ENCODE measurements at regions of chr1 and their contacts with region 1.

Region 1: GRCh38 chr1:109099938-109100773 is 9.6 kb downstream of the TMEM167B start:
- DNase-seq: peak; percentile 99
- H3K4me3 Mint-ChIP-seq: peak overlapping the region; percentile 96
- H3K27ac Mint-ChIP-seq: peak overlapping the region; percentile 96
- H3K4me1 Mint-ChIP-seq: peaks cover 11% of the 10 kb centered on the region
- H3K27me3 Mint-ChIP-seq: peaks cover 2% of the 10 kb centered on the region

Region 2: DNA sequence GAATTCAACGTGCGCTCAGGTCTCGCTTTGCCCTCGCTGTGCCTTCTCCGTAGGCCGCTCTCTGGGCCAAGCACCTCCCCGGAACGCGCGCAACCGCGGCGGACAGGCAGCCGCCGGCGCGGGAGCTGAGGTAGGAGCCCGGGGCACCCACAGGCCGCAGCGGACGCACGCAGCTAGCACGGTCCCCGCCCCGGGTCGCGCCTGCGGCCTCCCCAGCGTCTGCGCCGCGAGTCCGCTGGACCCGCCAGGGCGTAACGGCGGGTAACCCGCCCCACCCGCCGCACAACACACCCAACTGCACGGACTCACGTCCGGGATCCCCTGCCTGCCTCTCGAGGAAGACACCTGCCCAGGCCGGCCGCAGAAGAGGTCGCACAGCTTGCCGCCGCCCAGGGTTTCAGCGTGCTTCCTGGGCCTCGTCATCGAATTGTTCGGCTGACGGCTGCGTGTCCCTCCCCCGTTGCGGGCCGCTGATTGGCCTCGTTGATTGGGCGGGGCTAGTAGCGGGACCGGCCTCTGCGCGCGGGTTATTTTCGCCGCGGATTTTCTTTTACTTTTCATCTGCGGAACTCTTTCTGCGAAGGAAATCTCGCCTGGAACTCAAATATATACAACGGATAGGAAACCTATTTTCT is 137.0 kb before region 1 on chr1 and contains the start of gene CLCC1:
- intact Hi-C with region 1: loop called (anchors 5 kb)
- DNase-seq: peak; percentile 98
- H3K4me3 Mint-ChIP-seq: peak within 1 kb of the TSS; percentile 91
- H3K27ac Mint-ChIP-seq: peak within 1 kb of the TSS; percentile 97
- H3K4me1 Mint-ChIP-seq: peaks cover 21% of the 10 kb centered on the region
- H3K27me3 Mint-ChIP-seq: peaks cover 7% of the 10 kb centered on the region
- total RNA-seq, gene CLCC1: 21.5 and 26.2 TPM in 2 replicates

Region 3: GRCh38 chr1:109183058-109183738 is 83.0 kb after region 1 on chr1:
- intact Hi-C with region 1: no loop called
- DNase-seq: no peak
- H3K4me3 Mint-ChIP-seq: no peak overlapping the region
- H3K27ac Mint-ChIP-seq: no peak overlapping the region
- H3K4me1 Mint-ChIP-seq: no peaks in the 10 kb centered on the region
- H3K27me3 Mint-ChIP-seq: peaks cover 2% of the 10 kb centered on the region

Region 4: GRCh38 chr1:109193653-109194590 is 93.8 kb after region 1 on chr1:
- intact Hi-C with region 1: loop called (anchors 5 kb)
- DNase-seq: peak; percentile 91
- H3K4me3 Mint-ChIP-seq: no peak overlapping the region
- H3K27ac Mint-ChIP-seq: no peak overlapping the region
- H3K4me1 Mint-ChIP-seq: peaks cover 11% of the 10 kb centered on the region
- H3K27me3 Mint-ChIP-seq: no peaks in the 10 kb centered on the region

Region 5: DNA sequence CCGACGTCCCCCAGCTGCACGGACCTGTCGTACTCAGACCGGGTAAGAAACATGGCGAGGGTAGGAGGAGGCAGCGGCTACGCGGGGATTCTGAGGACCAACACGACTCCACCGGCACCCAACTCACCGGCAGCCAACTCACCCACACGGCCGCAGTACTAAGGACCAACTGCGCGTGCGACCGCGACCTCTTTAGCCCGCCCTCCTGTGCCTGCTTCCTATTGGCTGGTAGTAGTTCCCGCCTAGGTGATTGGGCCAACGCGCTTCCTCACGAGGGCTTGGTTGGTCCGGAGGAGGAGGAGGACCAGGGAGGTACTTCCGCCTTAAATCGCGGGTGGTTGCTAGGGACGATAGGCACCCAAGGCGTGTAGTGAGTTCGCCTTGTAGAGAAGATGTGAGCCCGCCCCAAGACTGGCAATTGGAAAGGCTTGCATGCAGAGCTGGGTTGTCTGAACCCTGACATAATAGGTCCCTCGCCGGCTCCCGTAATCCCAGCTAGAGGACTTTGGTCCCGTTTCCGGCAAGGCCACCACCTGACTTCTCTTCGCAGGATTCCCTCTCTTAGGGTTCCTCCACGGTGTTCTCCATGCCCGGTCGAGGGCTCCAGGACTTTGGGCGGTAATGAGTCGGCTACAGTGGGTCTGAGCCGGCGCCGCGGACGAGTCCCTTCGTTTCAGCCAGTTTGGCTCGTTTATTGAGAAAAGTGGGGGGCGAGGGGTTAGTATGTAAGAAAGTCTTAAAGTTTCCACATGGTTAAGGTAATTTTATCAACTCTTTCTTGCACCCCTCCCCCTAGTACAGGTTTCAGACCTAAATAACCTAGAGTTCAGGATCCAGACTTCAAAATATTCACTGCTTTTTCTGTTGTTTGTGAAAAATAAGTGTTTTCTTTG is 326.4 kb after region 1 on chr1 and contains the start of gene PSMA5:
- intact Hi-C with region 1: loop called (anchors 5 kb)
- DNase-seq: peak; percentile 98
- H3K4me3 Mint-ChIP-seq: peak within 1 kb of the TSS; percentile 94
- H3K27ac Mint-ChIP-seq: peak within 1 kb of the TSS; percentile 97
- H3K4me1 Mint-ChIP-seq: peaks cover 27% of the 10 kb centered on the region
- H3K27me3 Mint-ChIP-seq: peaks cover 2% of the 10 kb centered on the region
- total RNA-seq, gene PSMA5: 262 and 270 TPM in 2 replicates